BJ (cell line): ENCODE measurements at regions of chr6 and their contacts with region 1.

Region 1: DNA sequence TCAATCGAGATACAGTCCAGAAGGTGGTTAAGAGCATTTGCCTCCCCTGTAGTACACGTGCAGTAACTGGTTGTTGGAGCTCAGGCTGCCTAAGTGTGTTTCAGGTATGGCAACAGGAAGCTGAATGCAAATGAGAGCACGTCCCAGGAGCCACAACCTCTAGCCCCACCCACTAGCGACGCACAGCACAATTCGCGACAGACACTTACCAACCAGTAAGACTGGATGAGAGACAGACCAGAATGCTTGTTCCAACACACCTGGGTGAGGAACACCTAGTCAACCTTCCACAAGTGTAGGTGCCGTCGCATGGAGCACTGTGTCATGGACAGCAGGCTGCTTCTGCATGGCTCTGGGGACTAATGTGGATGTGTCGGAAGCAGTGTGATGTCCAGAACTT is 7.2 kb upstream of the SERPINB1 start:
- DNase-seq: no peak
- H3K4me3 ChIP-seq: no peak overlapping the region
- H3K27me3 ChIP-seq: no peaks in the 10 kb centered on the region
- CTCF ChIP-seq: no peak

Region 2: GRCh38 chr6:2641044-2641725 is 207.7 kb before region 1 on chr6:
- CTCF ChIA-PET with region 1: no interaction called
- POLR2A ChIA-PET with region 1: no interaction called
- DNase-seq: no peak
- H3K4me3 ChIP-seq: no peak overlapping the region
- H3K27me3 ChIP-seq: peaks cover 7% of the 10 kb centered on the region
- CTCF ChIP-seq: no peak

Region 3: GRCh38 chr6:2749969-2750600 is 98.8 kb before region 1 on chr6:
- CTCF ChIA-PET with region 1: no interaction called
- POLR2A ChIA-PET with region 1: no interaction called
- DNase-seq: no peak
- H3K4me3 ChIP-seq: no peak overlapping the region
- H3K27me3 ChIP-seq: no peaks in the 10 kb centered on the region
- CTCF ChIP-seq: peak; percentile 86

Region 4: GRCh38 chr6:2911171-2911570 is 62.3 kb after region 1 on chr6:
- CTCF ChIA-PET with region 1: interaction called, 15 read pairs
- POLR2A ChIA-PET with region 1: no interaction called
- DNase-seq: no peak
- H3K4me3 ChIP-seq: no peak overlapping the region
- H3K27me3 ChIP-seq: 0 out of 2 replicates have a peak, but pooled peaks cover 1% of the 10 kb centered on the region
- CTCF ChIP-seq: no peak

Region 5: DNA sequence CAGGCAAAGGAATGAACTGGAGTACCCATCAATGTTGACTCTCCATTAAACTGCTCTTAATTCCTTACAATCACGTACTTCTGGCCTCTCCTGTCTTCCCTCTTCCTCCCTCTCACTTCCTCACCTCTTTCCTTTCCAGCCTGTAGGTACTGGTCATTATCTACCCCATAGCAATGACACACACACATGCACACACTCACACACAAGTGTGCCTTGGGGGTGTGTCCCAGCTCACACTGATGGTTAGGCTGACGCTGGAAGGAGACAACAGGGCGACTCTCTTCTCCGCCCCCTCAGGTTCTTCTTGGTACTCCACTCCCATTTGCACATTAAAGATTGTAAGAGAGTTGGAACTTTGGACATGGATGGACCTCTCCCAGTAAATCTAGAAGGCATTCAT is 68.2 kb after region 1 on chr6:
- CTCF ChIA-PET with region 1: interaction called, 15 read pairs
- POLR2A ChIA-PET with region 1: no interaction called
- DNase-seq: no peak
- H3K4me3 ChIP-seq: no peak overlapping the region
- H3K27me3 ChIP-seq: peaks cover 1% of the 10 kb centered on the region; the same call in 1 of the 2 replicates
- CTCF ChIP-seq: no peak